ENCODE measurements at regions of chrX and their contacts with region 1.

Region 1: DNA sequence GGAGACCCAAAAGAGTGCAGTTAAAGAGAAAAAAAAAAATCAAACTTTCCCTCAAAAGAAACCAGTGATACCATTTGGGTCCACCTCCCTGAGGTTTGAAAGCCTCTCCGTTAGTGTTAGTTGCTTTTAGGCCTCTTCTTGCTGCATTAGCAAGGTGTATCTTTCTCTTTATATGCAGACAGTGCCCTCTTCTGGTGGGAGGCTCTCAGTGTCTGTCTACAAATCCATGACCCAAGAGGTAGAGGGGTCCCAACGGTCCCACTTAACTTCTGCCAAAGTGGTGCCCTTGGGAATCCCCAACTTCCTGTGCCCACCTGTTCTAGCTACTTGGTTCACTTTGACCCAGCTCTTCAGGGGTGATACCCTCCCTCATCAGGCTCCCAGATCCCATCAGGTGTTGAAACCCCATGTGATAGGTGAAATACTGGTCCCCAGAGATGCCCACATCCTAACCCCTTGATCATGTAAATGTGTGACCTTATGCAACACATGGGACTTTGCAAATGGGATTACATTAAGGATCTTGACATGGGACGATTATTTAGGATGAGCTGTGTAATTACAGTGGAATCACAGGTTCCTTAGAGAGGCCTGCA is 63.7 kb upstream of the CD99 start:
- DNase-seq: peak; percentile 85
- H3K4me3 ChIP-seq: no peak overlapping the region
- H3K27ac ChIP-seq: peak overlapping the region; percentile 90
- H3K4me1 ChIP-seq: peaks cover 38% of the 10 kb centered on the region
- CTCF ChIP-seq: peak; percentile 96

Region 2: GRCh38 chrX:1657367-1658070 is 969.9 kb before region 1 on chrX:
- CTCF ChIA-PET with region 1: no interaction called
- POLR2A ChIA-PET with region 1: no interaction called
- intact Hi-C with region 1: loop called (anchors 1 kb)
- DNase-seq: peak; percentile 66
- H3K4me3 ChIP-seq: peak overlapping the region; percentile 70
- H3K27ac ChIP-seq: peak overlapping the region; percentile 59
- H3K4me1 ChIP-seq: peaks cover 29% of the 10 kb centered on the region
- CTCF ChIP-seq: 0 out of 2 replicates have a peak, but pooled peaks have one; percentile 33

Region 3: DNA sequence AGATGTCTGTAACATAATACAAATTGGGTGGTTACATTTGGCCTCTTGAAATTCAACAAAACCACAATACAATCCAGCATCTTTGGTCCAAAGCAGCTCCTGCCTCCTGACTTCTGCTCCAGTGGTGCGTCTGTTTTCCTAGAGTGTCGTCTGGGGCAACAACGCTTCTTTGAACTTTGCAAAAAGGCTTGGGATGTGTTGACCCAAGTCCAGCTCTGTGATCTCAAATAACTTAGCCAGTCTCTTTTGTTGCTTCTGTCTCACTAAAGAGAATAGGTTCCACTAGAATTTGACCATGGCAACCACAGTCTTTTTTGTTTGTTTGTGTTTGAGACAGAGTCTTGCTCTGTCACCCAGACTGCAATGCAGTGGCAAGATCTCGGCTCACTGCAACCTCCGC is 450.6 kb before region 1 on chrX:
- CTCF ChIA-PET with region 1: no interaction called
- POLR2A ChIA-PET with region 1: no interaction called
- intact Hi-C with region 1: loop called (anchors 2 kb)
- DNase-seq: no peak
- H3K4me3 ChIP-seq: no peak overlapping the region
- H3K27ac ChIP-seq: no peak overlapping the region
- H3K4me1 ChIP-seq: peaks cover 47% of the 10 kb centered on the region
- CTCF ChIP-seq: no peak

Region 4: GRCh38 chrX:2608638-2609430 is 18.5 kb before region 1 on chrX:
- CTCF ChIA-PET with region 1: no interaction called
- POLR2A ChIA-PET with region 1: no interaction called
- intact Hi-C with region 1: loop called (anchors 2 kb)
- DNase-seq: peak; percentile 85
- H3K4me3 ChIP-seq: peak overlapping the region; percentile 93
- H3K27ac ChIP-seq: peak overlapping the region; percentile 51
- H3K4me1 ChIP-seq: peaks cover 21% of the 10 kb centered on the region
- CTCF ChIP-seq: peak; percentile 41; the same call in 1 of the 2 replicates

Region 5: DNA sequence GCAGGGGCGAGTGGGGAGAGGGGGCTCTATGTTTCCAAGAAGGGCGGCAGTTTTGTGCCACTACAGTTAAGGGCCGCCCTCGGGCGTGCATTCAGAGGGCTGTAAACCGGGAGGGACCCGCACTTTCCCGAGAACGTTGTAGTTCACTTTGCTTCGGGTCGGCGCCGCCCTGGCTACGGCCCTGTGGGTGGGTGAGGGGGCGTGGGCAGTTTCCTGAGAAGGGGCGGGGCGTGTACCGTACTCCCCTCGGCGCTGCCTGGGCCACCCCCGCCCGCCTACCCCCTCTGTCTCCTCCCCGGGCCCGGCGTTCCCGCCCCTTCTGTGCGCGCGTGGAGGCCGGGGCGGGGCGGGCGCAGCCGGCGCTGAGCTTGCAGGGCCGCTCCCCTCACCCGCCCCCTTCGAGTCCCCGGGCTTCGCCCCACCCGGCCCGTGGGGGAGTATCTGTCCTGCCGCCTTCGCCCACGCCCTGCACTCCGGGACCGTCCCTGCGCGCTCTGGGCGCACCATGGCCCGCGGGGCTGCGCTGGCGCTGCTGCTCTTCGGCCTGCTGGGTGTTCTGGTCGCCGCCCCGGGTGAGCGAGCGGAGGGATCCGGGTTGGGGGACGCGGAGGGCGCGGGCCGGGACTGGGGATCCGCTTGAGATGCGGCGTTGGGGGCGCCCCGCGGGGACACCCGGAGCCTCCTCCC is 63.6 kb after region 1 on chrX and contains the start of gene CD99:
- CTCF ChIA-PET with region 1: no interaction called
- POLR2A ChIA-PET with region 1: no interaction called
- intact Hi-C with region 1: loop called (anchors 5 kb)
- DNase-seq: peak; percentile 85
- H3K4me3 ChIP-seq: peak within 1 kb of the TSS; percentile 77
- H3K27ac ChIP-seq: peak within 1 kb of the TSS; percentile 44
- H3K4me1 ChIP-seq: peaks cover 34% of the 10 kb centered on the region
- CTCF ChIP-seq: no peak
- total RNA-seq, gene CD99: 80.7 and 92.3 TPM in 2 replicates

Region 6: DNA sequence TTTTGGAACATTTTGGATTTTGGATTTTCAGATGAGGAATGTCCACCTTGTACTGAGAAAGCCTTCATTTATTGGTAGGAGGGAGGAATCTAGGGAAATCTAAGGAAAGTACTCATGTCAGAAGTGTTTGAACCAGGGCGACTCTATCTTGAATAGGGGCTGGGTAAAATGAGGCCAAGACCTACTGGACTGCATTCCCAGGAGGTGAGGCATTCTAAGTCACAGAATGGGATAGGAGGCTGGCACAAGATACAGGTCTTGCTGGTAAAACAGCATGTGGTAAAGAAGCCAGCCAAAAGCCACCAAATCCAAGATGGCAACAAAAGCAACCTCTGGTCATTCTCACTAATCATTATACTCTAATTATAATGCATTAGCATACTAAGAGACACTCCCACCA is 600.2 kb after region 1 on chrX:
- CTCF ChIA-PET with region 1: no interaction called
- POLR2A ChIA-PET with region 1: no interaction called
- intact Hi-C with region 1: no loop called
- DNase-seq: no peak
- H3K4me3 ChIP-seq: no peak overlapping the region
- H3K27ac ChIP-seq: no peak overlapping the region
- H3K4me1 ChIP-seq: no peaks in the 10 kb centered on the region
- CTCF ChIP-seq: no peak

Measured in OCI-LY7 (cell line).